ENCODE measurements at regions of chr3 and their contacts with region 1.

Region 1: GRCh38 chr3:125374996-125375941 is at the start of gene ZNF148:
- DNase-seq: peak; percentile 86 to 94 (median 92)
- ATAC-seq: peak; percentile 99
- H3K4me3 ChIP-seq: peak within 1 kb of the TSS; percentile 98
- H3K4me3 Mint-ChIP-seq: peak within 1 kb of the TSS; percentile 94 to 100 (median 96)
- H3K27ac ChIP-seq: peak within 1 kb of the TSS; percentile 88
- H3K27ac Mint-ChIP-seq: peak within 1 kb of the TSS; percentile 85 to 99 (median 97)
- H3K4me1 ChIP-seq: peaks cover 10 to 19% of the 10 kb centered on the region in 2 donors
- H3K4me1 Mint-ChIP-seq: peaks cover 27 to 59% (median 48%) of the 10 kb centered on the region in 7 donors
- H3K27me3 ChIP-seq: no peaks in the 10 kb centered on the region
- H3K27me3 Mint-ChIP-seq: peaks cover 0 to 3% (median 0%) of the 10 kb centered on the region in 5 donors
- total RNA-seq, gene ZNF148: 36.3 to 69.6 (median 53.2) TPM

Region 2: GRCh38 chr3:124669470-124669869 is 705.8 kb before region 1 on chr3:
- CTCF ChIA-PET with region 1: no interaction called
- POLR2A ChIA-PET with region 1: no interaction called
- intact Hi-C with region 1: no loop called
- DNase-seq: no peak
- ATAC-seq: no peak
- H3K4me3 ChIP-seq: no peak overlapping the region
- H3K4me3 Mint-ChIP-seq: no peak overlapping the region
- H3K27ac ChIP-seq: no peak overlapping the region
- H3K27ac Mint-ChIP-seq: no peak overlapping the region
- H3K4me1 ChIP-seq: peaks cover 0 to 11% of the 10 kb centered on the region in 2 donors
- H3K4me1 Mint-ChIP-seq: peaks cover 6 to 21% (median 13%) of the 10 kb centered on the region in 7 donors
- H3K27me3 ChIP-seq: no peaks in the 10 kb centered on the region
- H3K27me3 Mint-ChIP-seq: peaks cover 0 to 5% (median 0%) of the 10 kb centered on the region in 5 donors

Region 3: GRCh38 chr3:124730129-124730940 is 644.9 kb before region 1 on chr3 and contains the start of gene UMPS:
- CTCF ChIA-PET with region 1: interaction called, 4 read pairs
- POLR2A ChIA-PET with region 1: no interaction called
- intact Hi-C with region 1: loop called (anchors 2 to 5 kb)
- DNase-seq: peak; percentile 85 to 94 (median 91)
- ATAC-seq: peak; percentile 97
- H3K4me3 ChIP-seq: peak within 1 kb of the TSS; percentile 78
- H3K4me3 Mint-ChIP-seq: peak within 1 kb of the TSS; percentile 93 to 100 (median 98)
- H3K27ac ChIP-seq: peak within 1 kb of the TSS; percentile 77
- H3K27ac Mint-ChIP-seq: peak within 1 kb of the TSS; percentile 96 to 100 (median 98)
- H3K4me1 ChIP-seq: peaks cover 11 to 32% of the 10 kb centered on the region in 2 donors
- H3K4me1 Mint-ChIP-seq: peaks cover 20 to 51% (median 48%) of the 10 kb centered on the region in 7 donors
- H3K27me3 ChIP-seq: peaks cover 0 to 4% of the 10 kb centered on the region in 2 donors
- H3K27me3 Mint-ChIP-seq: peaks cover 9 to 27% (median 19%) of the 10 kb centered on the region in 5 donors
- total RNA-seq, gene UMPS: 13.2 to 34.8 (median 24.8) TPM

Region 4: DNA sequence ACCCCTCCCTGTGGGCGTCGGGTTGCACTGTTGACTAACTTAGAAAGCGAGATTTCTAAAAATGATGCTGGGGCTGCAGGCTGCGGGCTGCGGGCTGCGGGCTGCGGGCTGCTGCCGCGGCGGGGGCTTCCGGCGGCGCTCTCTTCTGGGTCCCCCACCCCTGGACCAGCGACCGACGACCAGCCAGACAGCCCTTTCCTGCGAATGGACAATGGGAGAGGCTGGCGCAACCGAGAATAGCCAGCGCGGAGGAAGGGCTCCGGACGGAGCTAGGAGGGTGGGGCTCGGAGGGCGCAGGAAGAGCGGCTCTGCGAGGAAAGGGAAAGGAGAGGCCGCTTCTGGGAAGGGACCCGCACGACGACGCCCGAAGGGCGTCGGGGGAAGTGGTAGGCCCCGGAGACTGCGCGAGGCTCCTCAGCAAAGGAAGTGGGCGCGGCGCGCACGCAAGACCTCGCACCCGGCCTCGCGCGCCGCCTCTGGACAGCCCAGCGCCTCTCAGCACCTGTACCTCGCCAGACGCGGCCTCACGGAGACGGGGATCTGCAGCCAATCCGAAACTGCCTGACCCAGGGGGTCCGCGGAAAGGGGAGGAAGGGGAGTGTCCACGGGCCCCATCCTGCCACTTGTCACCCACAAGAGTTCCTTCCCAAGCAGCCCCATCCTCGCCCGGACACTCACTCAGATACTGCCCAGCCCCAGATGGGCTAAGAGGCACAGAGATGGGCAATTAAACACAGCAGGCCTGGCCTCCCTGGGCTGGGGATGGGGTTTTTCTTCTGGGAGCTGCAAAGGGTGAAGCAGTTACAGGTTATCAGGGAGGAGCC is 233.5 kb before region 1 on chr3:
- CTCF ChIA-PET with region 1: no interaction called
- POLR2A ChIA-PET with region 1: no interaction called
- intact Hi-C with region 1: loop called (anchors 2 to 5 kb)
- DNase-seq: peak; percentile 42 to 83 (median 66)
- ATAC-seq: peak; percentile 90
- H3K4me3 ChIP-seq: peak overlapping the region; percentile 49
- H3K4me3 Mint-ChIP-seq: peak overlapping the region; percentile 70 to 85 (median 80)
- H3K27ac ChIP-seq: peak overlapping the region; percentile 51
- H3K27ac Mint-ChIP-seq: peak overlapping the region in 8 of 9 donors; percentile 71 to 94 (median 86)
- H3K4me1 ChIP-seq: peaks cover 12 to 23% of the 10 kb centered on the region in 2 donors
- H3K4me1 Mint-ChIP-seq: peaks cover 20 to 61% (median 33%) of the 10 kb centered on the region in 7 donors
- H3K27me3 ChIP-seq: no peaks in the 10 kb centered on the region
- H3K27me3 Mint-ChIP-seq: peaks cover 0 to 44% (median 0%) of the 10 kb centered on the region in 5 donors

Region 5: DNA sequence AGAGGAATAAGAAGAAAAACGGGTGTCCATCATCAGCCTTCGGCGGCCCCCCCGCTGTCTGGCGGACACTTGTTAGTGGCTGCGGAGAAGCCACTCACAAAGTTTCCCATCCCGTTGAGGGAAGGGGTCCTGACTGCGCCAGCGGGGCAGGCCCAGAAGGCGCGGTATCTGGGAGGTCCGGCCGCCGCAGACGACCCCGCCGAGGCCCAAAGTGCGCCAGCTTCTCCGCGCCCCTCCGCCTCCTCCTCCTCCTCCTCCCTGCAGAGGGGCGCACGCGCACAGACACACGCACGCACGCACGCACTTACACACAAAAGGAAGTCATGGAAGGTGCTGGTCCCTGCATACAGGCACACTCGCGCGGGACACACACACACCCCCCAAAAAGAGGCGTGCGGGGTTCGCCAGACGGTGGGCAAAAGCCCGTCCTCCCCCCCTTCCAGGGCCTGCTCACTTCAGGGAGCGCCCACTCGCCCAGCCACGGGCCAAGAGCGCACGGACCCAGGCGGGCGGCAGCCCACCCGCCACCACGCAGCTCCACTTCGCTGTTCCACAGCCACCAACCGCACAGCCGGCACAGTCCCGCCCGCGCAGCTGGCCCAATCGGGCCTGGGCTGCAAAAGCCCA is 18.1 kb before region 1 on chr3:
- CTCF ChIA-PET with region 1: no interaction called
- POLR2A ChIA-PET with region 1: interaction called, 30 read pairs
- intact Hi-C with region 1: loop called (anchors 1 kb)
- DNase-seq: peak; percentile 51 to 84 (median 75)
- ATAC-seq: peak; percentile 97
- H3K4me3 ChIP-seq: peak overlapping the region; percentile 65
- H3K4me3 Mint-ChIP-seq: peak overlapping the region; percentile 81 to 98 (median 90)
- H3K27ac ChIP-seq: peak overlapping the region; percentile 89
- H3K27ac Mint-ChIP-seq: peak overlapping the region; percentile 20 to 96 (median 92)
- H3K4me1 ChIP-seq: peaks cover 0 to 6% of the 10 kb centered on the region in 2 donors
- H3K4me1 Mint-ChIP-seq: peaks cover 51 to 93% (median 76%) of the 10 kb centered on the region in 7 donors
- H3K27me3 ChIP-seq: no peaks in the 10 kb centered on the region
- H3K27me3 Mint-ChIP-seq: no peaks in the 10 kb centered on the region

Region 6: DNA sequence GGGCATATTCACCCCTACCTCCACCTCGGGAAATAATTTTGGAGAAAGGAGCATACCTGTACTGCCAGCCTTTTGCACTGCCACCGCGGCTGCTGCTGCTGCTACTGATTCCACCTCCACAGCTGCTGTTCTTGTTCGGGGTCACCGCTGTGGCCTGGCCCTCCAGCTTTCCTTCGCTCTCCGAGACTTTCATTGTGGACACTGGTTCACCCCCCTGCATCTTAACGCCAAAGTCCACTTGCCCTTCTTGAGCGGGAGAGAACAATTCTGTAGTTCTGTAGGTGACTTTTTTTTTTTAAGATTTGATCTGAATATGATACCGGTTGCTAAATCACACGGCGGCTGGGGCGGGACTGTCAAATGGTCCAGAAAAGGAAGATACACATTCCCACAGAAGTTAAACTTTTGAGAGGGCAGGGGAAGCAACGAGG is 219.3 kb after region 1 on chr3:
- CTCF ChIA-PET with region 1: no interaction called
- POLR2A ChIA-PET with region 1: interaction called, 3 read pairs
- intact Hi-C with region 1: loop called (anchors 1 kb)
- DNase-seq: peak in 4 of 9 donors; percentile 10 to 25 (median 16)
- ATAC-seq: no peak
- H3K4me3 ChIP-seq: peak overlapping the region; percentile 82
- H3K4me3 Mint-ChIP-seq: peak overlapping the region; percentile 90 to 99 (median 94)
- H3K27ac ChIP-seq: peak overlapping the region; percentile 90
- H3K27ac Mint-ChIP-seq: peak overlapping the region; percentile 73 to 95 (median 89)
- H3K4me1 ChIP-seq: peaks cover 4 to 15% of the 10 kb centered on the region in 2 donors
- H3K4me1 Mint-ChIP-seq: peaks cover 32 to 50% (median 42%) of the 10 kb centered on the region in 7 donors
- H3K27me3 ChIP-seq: no peaks in the 10 kb centered on the region
- H3K27me3 Mint-ChIP-seq: no peaks in the 10 kb centered on the region

Region 7: DNA sequence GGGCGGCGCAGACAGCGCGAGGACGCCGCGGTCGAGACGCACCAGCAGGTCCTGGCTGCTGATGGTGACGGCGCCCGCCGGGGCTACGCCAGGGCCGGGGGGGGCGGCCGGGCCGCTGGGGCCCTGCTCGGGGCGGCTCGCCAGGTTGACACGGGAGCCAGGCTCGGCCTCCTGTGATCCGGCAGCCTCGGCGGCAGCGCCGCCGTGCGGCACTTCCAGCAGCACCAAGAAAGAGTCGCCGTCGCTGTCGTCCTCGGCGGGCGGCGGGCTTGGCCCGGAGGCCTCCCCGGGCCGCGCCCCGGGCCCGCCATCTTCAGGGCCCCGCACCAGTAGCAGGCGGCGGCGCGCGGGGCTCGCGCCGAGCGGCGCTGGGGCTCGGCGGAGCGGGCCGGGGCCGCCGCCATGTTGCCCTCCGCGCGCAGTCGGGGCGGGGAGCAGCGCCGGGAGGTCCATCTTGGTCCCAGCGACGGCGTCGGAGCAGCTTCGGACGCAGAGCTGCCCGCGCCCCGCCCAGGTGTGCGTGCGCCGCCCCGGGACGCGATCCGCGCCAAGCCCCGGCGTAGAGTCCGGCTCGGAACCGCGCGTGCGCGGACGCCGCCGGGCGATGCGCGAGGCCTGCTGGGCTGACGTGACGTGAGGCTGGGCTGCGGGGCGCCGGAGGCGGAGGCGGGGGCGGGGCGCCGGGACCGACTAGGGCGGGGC is 1100.3 kb after region 1 on chr3 and contains the start of gene ZXDC:
- CTCF ChIA-PET with region 1: no interaction called
- POLR2A ChIA-PET with region 1: no interaction called
- intact Hi-C with region 1: loop called in 1 of 2 experiments (anchors 10 kb)
- DNase-seq: peak; percentile 85 to 95 (median 90)
- ATAC-seq: peak; percentile 89
- H3K4me3 ChIP-seq: peak within 1 kb of the TSS; percentile 89
- H3K4me3 Mint-ChIP-seq: peak within 1 kb of the TSS; percentile 81 to 97 (median 92)
- H3K27ac ChIP-seq: peak within 1 kb of the TSS; percentile 87
- H3K27ac Mint-ChIP-seq: peak within 1 kb of the TSS; percentile 82 to 96 (median 92)
- H3K4me1 ChIP-seq: peaks cover 29 to 34% of the 10 kb centered on the region in 2 donors
- H3K4me1 Mint-ChIP-seq: peaks cover 34 to 52% (median 48%) of the 10 kb centered on the region in 7 donors
- H3K27me3 ChIP-seq: no peaks in the 10 kb centered on the region
- H3K27me3 Mint-ChIP-seq: peaks cover 0 to 4% (median 0%) of the 10 kb centered on the region in 5 donors
- total RNA-seq, gene ZXDC: 33.7 to 71.9 (median 67.6) TPM

Region 8: DNA sequence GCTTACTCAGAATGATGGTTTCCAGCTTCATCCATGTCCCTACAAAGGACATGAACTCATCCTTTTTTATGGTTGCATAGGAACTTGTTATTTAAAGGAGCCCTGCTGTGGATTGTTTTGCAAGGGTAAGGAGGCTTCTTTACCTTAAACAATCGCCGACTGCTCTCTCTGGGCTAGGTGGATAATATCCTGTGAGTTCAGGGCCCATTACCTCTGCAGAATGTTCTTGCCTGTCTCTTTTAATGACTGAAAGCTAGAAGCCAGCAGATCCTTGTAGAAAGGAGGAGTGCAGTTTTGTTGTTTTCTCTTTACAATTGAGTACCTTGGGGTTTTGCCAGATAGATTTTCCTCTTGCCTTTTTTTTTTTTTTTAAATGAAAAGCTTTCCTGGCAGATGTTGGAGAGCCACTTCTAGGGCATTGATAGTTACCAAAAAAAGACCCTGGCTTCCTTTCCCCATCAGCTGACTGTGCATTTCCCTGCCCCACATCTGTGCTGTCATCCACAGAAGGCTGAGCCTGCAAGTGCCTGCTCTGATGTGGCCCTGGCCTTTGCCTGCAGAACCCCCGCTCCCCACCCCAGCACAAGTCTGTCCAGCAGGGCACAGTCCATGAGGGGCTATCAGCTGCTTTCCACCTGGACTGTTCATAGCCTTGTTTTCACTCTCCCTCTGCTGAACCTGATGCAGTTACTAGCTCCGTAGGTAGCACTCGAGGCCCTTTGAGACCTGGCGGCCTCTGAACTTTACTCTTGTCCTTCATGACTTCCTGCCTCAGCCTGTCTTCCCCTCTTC is 1441.9 kb after region 1 on chr3:
- CTCF ChIA-PET with region 1: no interaction called
- POLR2A ChIA-PET with region 1: no interaction called
- intact Hi-C with region 1: no loop called
- DNase-seq: no peak
- ATAC-seq: no peak
- H3K4me3 ChIP-seq: no peak overlapping the region
- H3K4me3 Mint-ChIP-seq: no peak overlapping the region
- H3K27ac ChIP-seq: no peak overlapping the region
- H3K27ac Mint-ChIP-seq: peak overlapping the region in 3 of 9 donors; percentile 33 to 77 (median 57)
- H3K4me1 ChIP-seq: no peaks in the 10 kb centered on the region
- H3K4me1 Mint-ChIP-seq: peaks cover 0 to 22% (median 8%) of the 10 kb centered on the region in 7 donors
- H3K27me3 ChIP-seq: no peaks in the 10 kb centered on the region
- H3K27me3 Mint-ChIP-seq: no peaks in the 10 kb centered on the region